MCF 10A (cell line): ENCODE measurements at regions of chr15 and their contacts with region 1.

Region 1: DNA sequence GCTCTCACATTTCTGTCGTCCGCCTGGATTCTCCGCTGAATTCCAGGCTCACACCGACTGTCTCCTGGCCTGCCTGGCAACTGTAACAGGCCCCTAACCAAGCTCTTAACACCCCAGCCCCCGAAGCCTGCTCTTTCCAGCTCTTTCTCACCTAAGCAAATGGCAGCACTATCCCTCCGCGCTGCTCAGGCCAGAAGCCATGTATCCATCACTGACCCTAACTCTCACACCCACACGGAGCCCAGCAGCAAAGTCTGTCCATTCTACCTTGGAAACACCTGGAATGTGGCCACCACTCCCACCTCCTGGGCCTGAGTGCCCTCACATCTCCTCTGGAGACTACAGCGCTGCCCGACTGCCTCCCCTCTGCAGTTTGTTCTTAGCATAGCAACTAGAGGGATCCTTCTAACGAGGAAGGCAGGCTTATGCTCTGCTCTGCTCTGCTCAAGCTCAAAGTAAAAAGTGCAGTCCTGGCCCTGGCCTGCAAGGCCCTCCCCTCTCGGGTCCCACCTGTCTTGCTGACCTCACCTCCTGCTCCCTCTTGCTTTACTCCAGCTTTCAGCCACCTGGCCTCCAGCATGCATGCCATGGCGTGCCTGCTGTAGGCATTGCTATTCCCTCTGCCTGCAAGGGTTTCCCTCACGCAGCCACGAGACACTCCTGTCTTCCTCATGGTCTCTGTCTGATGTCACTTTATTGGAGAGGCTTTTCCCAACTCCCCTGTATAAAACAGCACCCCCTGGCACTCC is 27.2 kb downstream of the FEM1B start:
- DNase-seq: no peak
- H3K4me3 Mint-ChIP-seq: no peak overlapping the region
- H3K27ac Mint-ChIP-seq: peak overlapping the region; percentile 36
- H3K4me1 Mint-ChIP-seq: peaks cover 19% of the 10 kb centered on the region
- H3K27me3 Mint-ChIP-seq: no peaks in the 10 kb centered on the region
- CTCF ChIP-seq: no peak

Region 2: GRCh38 chr15:68277603-68278344 is 27.0 kb before region 1 on chr15 and contains the start of gene FEM1B:
- CTCF ChIA-PET with region 1: interaction called, 22 read pairs
- POLR2A ChIA-PET with region 1: interaction called, 415 read pairs
- intact Hi-C with region 1: no loop called
- DNase-seq: peak; percentile 92
- H3K4me3 Mint-ChIP-seq: peak within 1 kb of the TSS; percentile 85
- H3K27ac Mint-ChIP-seq: peak within 1 kb of the TSS; percentile 99
- H3K4me1 Mint-ChIP-seq: peaks cover 55% of the 10 kb centered on the region
- H3K27me3 Mint-ChIP-seq: no peaks in the 10 kb centered on the region
- CTCF ChIP-seq: no peak
- total RNA-seq, gene FEM1B: 50.7 and 70.2 TPM in 2 replicates

Region 3: GRCh38 chr15:68372291-68372811 is 67.6 kb after region 1 on chr15:
- CTCF ChIA-PET with region 1: interaction called, 3 read pairs
- POLR2A ChIA-PET with region 1: no interaction called
- intact Hi-C with region 1: loop called (anchors 2 kb)
- DNase-seq: peak; percentile 55
- H3K4me3 Mint-ChIP-seq: no peak overlapping the region
- H3K27ac Mint-ChIP-seq: no peak overlapping the region
- H3K4me1 Mint-ChIP-seq: no peaks in the 10 kb centered on the region
- H3K27me3 Mint-ChIP-seq: no peaks in the 10 kb centered on the region
- CTCF ChIP-seq: peak; percentile 20

Region 4: GRCh38 chr15:68399096-68400065 is 94.6 kb after region 1 on chr15:
- CTCF ChIA-PET with region 1: no interaction called
- POLR2A ChIA-PET with region 1: no interaction called
- intact Hi-C with region 1: no loop called
- DNase-seq: no peak
- H3K4me3 Mint-ChIP-seq: no peak overlapping the region
- H3K27ac Mint-ChIP-seq: no peak overlapping the region
- H3K4me1 Mint-ChIP-seq: peaks cover 7% of the 10 kb centered on the region
- H3K27me3 Mint-ChIP-seq: peaks cover 10% of the 10 kb centered on the region
- CTCF ChIP-seq: no peak

Region 5: DNA sequence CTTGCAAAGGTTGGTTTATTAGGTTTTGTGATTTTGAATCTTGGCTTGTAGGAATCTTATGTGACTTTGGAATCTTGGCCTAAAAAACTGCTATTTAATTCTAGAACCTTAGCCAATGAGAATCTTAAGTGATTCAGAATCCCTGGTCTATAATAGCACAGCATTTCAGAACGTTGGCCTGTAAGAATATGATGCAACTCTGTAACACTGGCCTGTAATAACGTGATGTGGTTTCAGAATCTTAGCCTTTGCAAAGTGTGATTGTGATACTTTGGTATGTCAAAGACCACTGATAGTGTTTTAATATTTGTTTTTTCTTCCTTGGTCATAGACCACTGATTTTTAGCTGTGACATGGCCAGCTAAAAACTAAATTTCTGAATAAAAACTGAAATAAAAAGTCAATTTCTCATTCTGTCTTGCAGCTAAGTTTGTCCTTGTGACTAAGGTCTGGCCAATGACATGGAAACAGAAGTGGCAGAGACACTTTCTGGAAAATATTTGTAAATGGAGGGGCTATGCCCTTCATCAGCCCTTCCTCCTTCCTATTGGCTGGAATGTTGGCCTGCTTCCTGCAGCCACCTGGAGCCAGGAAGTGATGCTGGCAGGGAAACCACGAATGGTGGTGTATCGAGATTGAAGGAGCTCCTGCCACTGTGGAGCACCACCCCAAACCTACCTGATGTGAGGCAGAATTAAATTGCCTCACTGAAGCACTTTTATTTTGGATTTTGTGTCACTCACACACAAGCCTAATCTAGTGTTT is 231.8 kb after region 1 on chr15:
- CTCF ChIA-PET with region 1: interaction called, 8 read pairs
- POLR2A ChIA-PET with region 1: no interaction called
- intact Hi-C with region 1: loop called (anchors 1 kb)
- DNase-seq: peak; percentile 42
- H3K4me3 Mint-ChIP-seq: no peak overlapping the region
- H3K27ac Mint-ChIP-seq: peak overlapping the region; percentile 66
- H3K4me1 Mint-ChIP-seq: no peaks in the 10 kb centered on the region
- H3K27me3 Mint-ChIP-seq: no peaks in the 10 kb centered on the region
- CTCF ChIP-seq: no peak

Region 6: DNA sequence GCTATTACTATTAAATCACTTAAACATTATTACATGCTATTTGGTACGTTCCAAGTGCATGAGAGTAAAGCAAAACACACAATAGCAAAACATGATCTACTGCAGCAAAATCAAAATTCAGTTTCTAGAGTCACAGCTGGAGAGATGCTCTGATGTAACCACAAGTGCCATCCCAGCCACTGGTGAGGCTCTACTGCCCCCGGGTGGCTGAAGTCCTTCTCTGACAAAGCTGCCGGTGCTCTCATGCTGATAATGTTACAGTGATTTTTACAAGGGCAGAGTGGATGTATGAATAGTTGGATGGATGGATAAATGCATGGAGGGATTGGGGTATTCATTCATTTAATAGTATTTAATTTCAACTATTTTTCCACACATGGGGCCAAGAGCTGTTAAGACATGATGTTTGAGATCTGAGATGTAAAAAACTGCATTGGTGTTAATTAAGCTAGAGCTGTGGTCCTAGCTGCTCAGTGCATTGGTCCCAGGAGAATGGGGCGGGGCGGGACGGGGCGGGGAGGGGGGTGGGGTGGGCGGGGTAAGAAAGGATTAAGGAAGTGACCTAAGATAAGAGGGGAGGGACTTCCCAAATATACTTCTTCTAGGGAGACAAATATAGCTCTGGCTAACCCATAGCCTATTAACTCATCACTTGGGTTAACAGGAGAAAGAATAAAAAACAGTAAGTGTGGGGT is 620.2 kb after region 1 on chr15:
- CTCF ChIA-PET with region 1: interaction called, 6 read pairs
- POLR2A ChIA-PET with region 1: interaction called, 3 read pairs
- intact Hi-C with region 1: loop called (anchors 2 kb)
- DNase-seq: peak; percentile 83
- H3K4me3 Mint-ChIP-seq: no peak overlapping the region
- H3K27ac Mint-ChIP-seq: no peak overlapping the region
- H3K4me1 Mint-ChIP-seq: peaks cover 10% of the 10 kb centered on the region
- H3K27me3 Mint-ChIP-seq: peaks cover 11% of the 10 kb centered on the region
- CTCF ChIP-seq: peak; percentile 87